ENCODE measurements at regions of chr15 and their contacts with region 1.

Region 1: GRCh38 chr15:74906446-74907162 is at the start of gene FAM219B:
- DNase-seq: peak; percentile 83
- ATAC-seq: peak; percentile 86
- H3K4me3 ChIP-seq: peak within 1 kb of the TSS; percentile 92
- H3K27ac ChIP-seq: peak within 1 kb of the TSS; percentile 58
- H3K4me1 ChIP-seq: peaks cover 23% of the 10 kb centered on the region
- H3K27me3 ChIP-seq: no peaks in the 10 kb centered on the region
- CTCF ChIP-seq: no peak
- total RNA-seq, gene FAM219B: 23.8 and 24.3 TPM in 2 replicates

Region 2: GRCh38 chr15:74842581-74843444 is 63.8 kb before region 1 on chr15 and contains the start of gene ULK3:
- CTCF ChIA-PET with region 1: no interaction called
- POLR2A ChIA-PET with region 1: interaction called, 3 read pairs
- intact Hi-C with region 1: loop called (anchors 10 kb)
- DNase-seq: peak; percentile 88
- ATAC-seq: peak; percentile 85
- H3K4me3 ChIP-seq: peak within 1 kb of the TSS; percentile 80
- H3K27ac ChIP-seq: peak within 1 kb of the TSS; percentile 19; the same call in 1 of the 2 replicates
- H3K4me1 ChIP-seq: peaks cover 14% of the 10 kb centered on the region
- H3K27me3 ChIP-seq: no peaks in the 10 kb centered on the region
- CTCF ChIP-seq: peak; percentile 41
- total RNA-seq, gene ULK3: 20.3 and 29.7 TPM in 2 replicates

Region 3: GRCh38 chr15:74937596-74938296 is 31.1 kb after region 1 on chr15 and contains the start of gene COX5A:
- CTCF ChIA-PET with region 1: no interaction called
- POLR2A ChIA-PET with region 1: interaction called, 3 read pairs
- intact Hi-C with region 1: loop called (anchors 5 kb)
- DNase-seq: peak; percentile 96
- ATAC-seq: peak; percentile 97
- H3K4me3 ChIP-seq: peak within 1 kb of the TSS; percentile 99
- H3K27ac ChIP-seq: peak within 1 kb of the TSS; percentile 52
- H3K4me1 ChIP-seq: peaks cover 8% of the 10 kb centered on the region; the same call in 1 of the 2 replicates
- H3K27me3 ChIP-seq: no peaks in the 10 kb centered on the region
- CTCF ChIP-seq: no peak
- total RNA-seq, gene COX5A: 109 and 145 TPM in 2 replicates

Region 4: DNA sequence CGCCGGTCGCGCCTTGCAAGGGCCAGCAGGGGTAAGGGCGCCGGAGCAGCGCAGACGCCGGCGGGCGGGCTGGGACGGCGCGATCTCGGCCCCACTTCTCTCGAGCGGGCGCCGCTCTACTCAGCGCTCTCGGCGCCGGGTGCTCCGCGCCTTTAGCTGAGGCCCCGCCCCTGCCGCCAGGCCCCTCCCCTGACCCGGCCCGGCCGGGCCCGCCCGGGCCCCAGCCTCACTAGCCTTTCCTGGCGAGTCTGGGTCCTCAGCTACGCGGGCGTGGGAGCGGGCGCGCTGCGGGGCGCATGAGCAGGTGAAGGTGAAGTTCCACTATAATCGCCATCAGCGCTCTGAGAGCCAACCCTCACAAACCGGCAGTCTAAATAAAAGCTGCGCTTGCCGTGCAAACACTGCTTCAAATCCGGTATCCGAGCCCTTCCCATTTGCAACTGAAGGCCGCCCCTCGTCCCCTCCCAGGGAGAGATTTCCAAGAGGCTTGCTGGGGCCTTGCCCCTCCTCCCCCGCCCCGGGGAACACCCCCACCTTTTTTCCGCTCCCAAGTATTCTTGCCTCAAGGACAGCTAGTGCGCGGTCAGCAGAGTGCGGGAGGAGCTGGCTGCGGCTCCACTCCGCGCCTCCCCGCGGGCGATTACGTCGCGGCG is 50.2 kb after region 1 on chr15 and contains the start of gene RPP25:
- CTCF ChIA-PET with region 1: no interaction called
- POLR2A ChIA-PET with region 1: no interaction called
- intact Hi-C with region 1: no loop called
- DNase-seq: peak; percentile 77
- ATAC-seq: peak; percentile 92
- H3K4me3 ChIP-seq: peak within 1 kb of the TSS; percentile 78
- H3K27ac ChIP-seq: no peak within 1 kb of the TSS
- H3K4me1 ChIP-seq: peaks cover 18% of the 10 kb centered on the region; the same call in 1 of the 2 replicates
- H3K27me3 ChIP-seq: no peaks in the 10 kb centered on the region
- CTCF ChIP-seq: no peak
- total RNA-seq, gene RPP25: 6.6 and 7.1 TPM in 2 replicates